A549 (cell line): ENCODE measurements at regions of chr1 and their contacts with region 1.

Region 1: DNA sequence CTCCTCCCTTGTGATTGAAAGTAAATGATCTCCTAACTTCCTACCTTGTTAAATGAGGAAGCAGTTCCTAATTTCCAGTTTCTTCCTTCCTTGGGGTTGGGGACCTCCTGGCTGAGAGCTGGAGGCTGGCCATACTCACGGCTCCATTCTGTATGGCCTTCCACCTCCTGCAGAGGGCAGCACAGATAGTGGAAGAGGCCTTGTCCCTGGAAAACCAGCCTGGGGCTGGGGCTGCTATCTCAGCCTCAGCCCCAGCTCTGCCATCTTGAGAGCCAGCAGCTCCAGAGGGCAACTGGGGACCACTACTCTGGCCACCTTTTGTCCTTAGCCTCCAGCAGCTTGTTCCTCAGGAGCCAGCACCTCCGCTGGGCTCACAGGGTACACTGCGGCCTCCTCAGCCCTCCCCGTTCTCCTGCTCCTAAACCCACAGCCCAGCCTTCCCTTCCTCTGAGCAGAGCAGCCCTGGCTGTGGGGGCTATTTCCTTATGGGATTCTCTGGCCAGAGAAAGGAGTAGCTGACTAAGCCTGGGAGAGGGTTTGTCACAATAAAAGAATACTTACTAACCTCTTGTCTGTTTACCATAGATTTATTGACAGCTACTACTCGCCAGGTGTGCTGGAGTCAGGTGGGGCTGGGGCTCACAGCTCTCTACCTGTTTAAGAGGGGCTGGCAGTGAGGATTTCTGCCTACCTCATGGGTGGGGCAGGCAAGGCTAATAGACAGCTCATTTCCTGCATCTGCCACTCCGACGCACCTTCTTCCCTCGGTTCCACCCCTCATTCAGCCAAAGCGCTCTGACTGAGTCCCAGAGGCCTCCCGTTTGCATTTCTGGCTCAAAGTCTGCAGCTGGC is 6.3 kb downstream of the TMEM234 start:
- DNase-seq: peak; percentile 61 to 62
- ATAC-seq: peak; percentile 94 to 96
- H3K4me3 ChIP-seq: no peak overlapping the region
- H3K27ac ChIP-seq: no peak overlapping the region
- H3K4me1 ChIP-seq: peaks cover 3% of the 10 kb centered on the region; the same call in 2 of the 3 replicates
- CTCF ChIP-seq: peak; percentile 64
- EP300 ChIP-seq: no peak
- POLR2A ChIP-seq: no peak
- RAD21 ChIP-seq: peak; percentile 65 to 75

Region 2: DNA sequence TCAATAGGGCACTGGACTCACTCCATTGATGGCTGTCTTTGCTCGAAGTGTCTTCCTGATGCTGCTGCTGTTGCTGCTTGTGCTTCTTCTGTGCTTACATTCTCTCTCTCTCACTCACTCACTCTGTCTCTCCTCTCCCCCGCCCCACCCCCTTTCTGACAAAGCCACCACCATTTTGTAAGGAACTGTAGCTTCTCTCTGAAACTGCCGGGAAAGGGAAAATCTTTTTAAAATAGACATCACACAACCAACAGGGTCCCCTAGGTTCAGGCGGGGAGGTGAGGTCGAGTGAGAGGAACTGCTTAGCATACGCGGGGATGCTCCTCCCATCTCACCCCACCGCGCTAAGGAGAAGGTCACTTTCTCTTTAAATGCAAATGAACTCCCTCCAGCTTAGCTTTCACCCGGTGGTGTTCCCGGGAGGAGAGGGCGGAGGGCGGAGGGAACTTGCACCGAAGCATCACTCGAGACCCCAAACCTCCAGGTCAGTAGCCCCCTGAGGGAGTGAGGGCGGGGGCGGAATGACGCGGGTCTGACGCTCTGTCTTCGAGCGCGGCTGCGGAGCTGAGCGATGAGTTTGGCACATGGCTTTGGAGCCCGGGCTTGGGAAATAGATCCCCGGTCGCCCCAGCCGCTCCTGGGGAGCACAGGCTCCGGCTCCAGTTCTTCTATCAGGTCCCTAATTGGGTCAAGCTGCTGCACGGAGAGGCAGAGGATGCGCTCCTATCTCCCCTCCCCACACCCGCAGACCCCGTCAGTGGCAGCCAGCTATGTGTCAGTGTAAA is 15.4 kb before region 1 on chr1 and contains the start of gene CCDC28B:
- CTCF ChIA-PET with region 1: interaction called, 38 read pairs
- POLR2A ChIA-PET with region 1: interaction called, 5 read pairs
- DNase-seq: peak in 1 of 2 experiments; percentile 49
- ATAC-seq: peak; percentile 48 to 53
- H3K4me3 ChIP-seq: peak within 1 kb of the TSS; percentile 35
- H3K27ac ChIP-seq: peak within 1 kb of the TSS; percentile 15 to 77; a peak in 5 of 6 replicates
- H3K4me1 ChIP-seq: 0 out of 3 replicates have a peak, but pooled peaks cover 5% of the 10 kb centered on the region
- CTCF ChIP-seq: no peak
- EP300 ChIP-seq: no peak
- POLR2A ChIP-seq: no peak
- RAD21 ChIP-seq: no peak
- polyA plus RNA-seq, gene CCDC28B: 1.1 and 1.2 TPM in 2 replicates

Region 3: DNA sequence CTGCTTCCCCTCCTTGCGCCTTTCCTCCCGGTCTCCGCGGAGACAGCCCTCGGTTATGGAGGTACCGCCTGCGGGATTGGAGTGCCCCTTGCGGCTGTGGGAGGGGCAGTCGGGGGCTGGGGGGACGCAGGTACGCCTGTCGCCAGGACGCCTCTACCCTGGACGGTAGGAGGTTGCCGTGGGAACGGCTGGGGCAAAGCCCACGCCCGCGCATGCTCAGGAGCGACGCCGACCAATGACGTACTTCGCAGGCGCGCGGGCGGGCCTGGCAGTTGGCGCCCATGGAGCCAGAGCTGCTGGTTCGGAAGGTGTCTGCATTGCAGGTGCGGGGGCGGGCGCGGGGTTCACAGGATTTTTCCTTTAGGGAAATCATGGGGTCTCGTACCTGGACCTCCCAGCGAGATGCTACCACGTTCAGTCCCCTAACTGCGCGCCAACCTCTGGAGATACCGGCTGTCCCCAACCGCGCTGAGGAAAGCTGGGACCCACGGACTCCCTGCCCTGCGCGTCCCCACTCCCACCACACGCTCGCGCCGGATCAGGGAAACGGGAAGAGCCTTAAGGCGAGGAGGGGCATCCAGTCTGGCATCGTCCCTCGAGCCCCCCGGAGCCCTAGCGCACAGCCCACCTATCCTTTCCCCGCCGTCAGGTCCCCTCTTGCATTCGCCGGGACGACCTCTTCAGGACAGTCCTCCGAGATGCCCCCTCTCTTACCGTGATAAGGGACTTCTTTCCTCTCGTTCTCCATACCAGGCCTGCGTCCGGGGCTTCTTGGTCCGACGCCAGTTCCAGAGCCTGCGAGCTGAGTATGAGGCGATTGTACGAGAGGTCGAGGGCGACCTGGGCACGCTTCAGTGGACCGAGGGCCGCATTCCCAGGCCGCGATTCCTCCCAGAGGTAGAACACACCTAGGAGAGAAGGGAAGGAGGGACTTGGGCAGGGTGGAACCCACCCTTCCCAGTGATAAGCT is 10.2 kb before region 1 on chr1 and contains the start of gene IQCC:
- CTCF ChIA-PET with region 1: interaction called, 38 read pairs
- POLR2A ChIA-PET with region 1: no interaction called
- DNase-seq: peak; percentile 70 to 81
- ATAC-seq: peak; percentile 75 to 84
- H3K4me3 ChIP-seq: peak within 1 kb of the TSS; percentile 83
- H3K27ac ChIP-seq: peak within 1 kb of the TSS; percentile 85 to 92
- H3K4me1 ChIP-seq: peaks cover 12% of the 10 kb centered on the region; the same call in 2 of the 3 replicates
- CTCF ChIP-seq: no peak
- EP300 ChIP-seq: no peak
- POLR2A ChIP-seq: peak; percentile 57
- RAD21 ChIP-seq: no peak
- polyA plus RNA-seq, gene IQCC: 1.6 and 1.8 TPM in 2 replicates

Region 4: DNA sequence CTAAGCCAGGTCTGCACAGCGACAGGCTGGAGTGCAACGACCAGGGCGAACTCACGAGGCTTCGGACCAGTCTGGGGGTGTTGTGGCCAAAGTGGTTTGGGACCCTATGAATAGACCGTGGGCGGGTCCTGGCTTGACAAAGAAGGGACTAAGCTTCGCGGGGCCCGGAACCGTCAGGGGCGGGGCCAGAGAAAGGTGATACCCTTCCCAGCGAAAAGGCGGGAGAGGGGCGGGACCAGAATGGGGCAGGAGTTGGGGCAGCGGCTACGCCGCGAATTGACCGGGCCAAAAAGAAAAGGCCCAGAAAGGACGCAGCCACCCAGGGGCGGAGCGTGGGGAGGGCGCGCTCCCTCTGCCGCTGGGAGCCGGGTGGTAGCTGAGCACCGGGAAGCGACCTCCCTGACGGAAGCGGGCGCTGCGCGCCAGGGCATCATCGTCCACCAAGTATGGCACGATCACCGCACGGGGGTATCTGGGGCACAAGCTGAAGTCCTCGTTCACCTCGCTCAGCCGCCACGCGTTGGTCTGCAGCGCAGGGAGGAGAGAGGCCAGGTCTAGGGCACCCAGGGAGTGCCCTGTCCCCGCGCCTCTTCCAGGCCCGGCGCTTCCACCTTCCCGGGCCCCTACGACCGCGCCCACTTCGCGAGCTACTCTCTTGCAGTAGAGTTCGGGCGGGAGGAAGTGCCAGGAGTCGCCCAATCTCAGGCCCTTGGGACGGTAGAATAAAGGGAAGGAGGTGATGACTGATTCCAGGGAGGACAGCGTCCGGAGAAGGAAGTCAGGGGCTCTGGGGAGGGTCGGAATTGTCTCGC is 24.5 kb after region 1 on chr1:
- CTCF ChIA-PET with region 1: interaction called, 96 read pairs
- POLR2A ChIA-PET with region 1: interaction called, 8 read pairs
- DNase-seq: peak; percentile 53 to 75
- ATAC-seq: peak; percentile 76 to 85
- H3K4me3 ChIP-seq: peak overlapping the region; percentile 56
- H3K27ac ChIP-seq: peak overlapping the region; percentile 79 to 94
- H3K4me1 ChIP-seq: peaks cover 41% of the 10 kb centered on the region
- CTCF ChIP-seq: peak; percentile 36
- EP300 ChIP-seq: no peak
- POLR2A ChIP-seq: peak; percentile 71
- RAD21 ChIP-seq: peak; percentile 6 to 37; a peak in 2 of 5 replicates

Region 5: DNA sequence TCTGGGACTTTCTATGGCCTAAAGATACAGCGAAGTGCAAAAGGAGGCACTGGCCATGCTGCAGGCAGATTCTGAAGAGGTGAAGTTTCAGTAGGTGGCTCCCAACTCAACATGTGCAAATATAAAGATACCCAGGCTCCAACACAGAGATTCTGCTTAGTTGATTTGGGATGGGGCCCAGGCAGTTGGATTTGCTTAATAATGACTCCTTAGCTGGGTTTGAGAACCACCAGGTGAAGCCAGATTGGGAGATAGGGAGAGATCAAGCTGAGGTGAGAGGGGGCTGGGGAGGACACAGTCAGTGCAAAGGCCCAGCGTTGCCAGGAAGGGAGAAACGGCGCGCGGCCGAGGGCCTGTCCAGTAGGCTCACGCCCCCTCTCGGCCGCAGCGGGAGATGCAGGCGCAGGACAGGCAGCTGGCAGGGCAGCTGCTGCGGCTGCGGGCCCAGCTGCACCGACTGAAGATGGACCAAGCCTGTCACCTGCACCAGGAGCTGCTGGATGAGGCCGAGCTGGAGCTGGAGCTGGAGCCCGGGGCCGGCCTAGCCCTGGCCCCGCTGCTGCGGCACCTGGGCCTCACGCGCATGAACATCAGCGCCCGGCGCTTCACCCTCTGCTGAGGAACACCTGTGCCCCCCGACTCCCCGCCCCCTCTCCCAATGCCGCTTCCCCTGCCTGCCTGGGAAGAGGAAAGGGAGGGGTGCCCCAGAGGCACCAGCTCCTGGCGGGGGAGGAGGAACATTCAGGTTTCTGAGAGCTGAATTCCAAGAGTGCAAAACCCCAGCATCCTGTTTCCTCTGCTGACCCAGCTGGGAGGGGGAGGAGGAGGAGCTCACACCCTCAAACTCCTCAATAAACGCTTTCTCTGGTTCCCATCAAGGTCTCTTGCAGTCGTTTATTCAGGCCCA is 32.4 kb after region 1 on chr1:
- CTCF ChIA-PET with region 1: interaction called, 96 read pairs
- POLR2A ChIA-PET with region 1: no interaction called
- DNase-seq: peak; percentile 72 to 74
- ATAC-seq: peak; percentile 90 to 95
- H3K4me3 ChIP-seq: no peak overlapping the region
- H3K27ac ChIP-seq: peak overlapping the region in 1 of 2 experiments; percentile 57; a peak in 2 of 6 replicates
- H3K4me1 ChIP-seq: peaks cover 3% of the 10 kb centered on the region; the same call in 1 of the 3 replicates
- CTCF ChIP-seq: peak; percentile 66
- EP300 ChIP-seq: no peak
- POLR2A ChIP-seq: no peak
- RAD21 ChIP-seq: peak; percentile 47 to 56

Region 6: DNA sequence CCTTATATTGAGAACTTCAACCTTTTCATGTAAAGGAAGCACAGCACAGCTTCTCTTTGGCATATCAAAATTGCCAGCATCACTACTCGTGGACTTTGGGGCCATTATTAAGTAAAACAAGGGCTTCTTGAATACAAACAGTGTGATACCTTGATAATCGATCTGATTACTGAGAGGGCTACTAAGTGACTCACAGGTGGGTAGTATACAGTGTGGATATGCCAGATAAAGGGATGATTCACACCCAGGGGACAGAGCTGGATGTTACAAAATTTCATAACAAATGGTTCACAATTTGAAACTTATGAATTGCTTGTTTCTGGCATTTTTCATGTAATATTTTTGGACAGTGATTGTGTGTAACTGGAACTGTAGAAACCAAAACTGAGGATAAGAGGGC is 91.5 kb after region 1 on chr1:
- CTCF ChIA-PET with region 1: interaction called, 14 read pairs
- POLR2A ChIA-PET with region 1: no interaction called
- DNase-seq: no peak
- ATAC-seq: no peak
- H3K4me3 ChIP-seq: no peak overlapping the region
- H3K27ac ChIP-seq: no peak overlapping the region
- H3K4me1 ChIP-seq: peaks cover 27% of the 10 kb centered on the region; the same call in 2 of the 3 replicates
- CTCF ChIP-seq: no peak
- EP300 ChIP-seq: no peak
- POLR2A ChIP-seq: no peak
- RAD21 ChIP-seq: no peak

Region 7: GRCh38 chr1:32335790-32336590 is 120.1 kb after region 1 on chr1 and contains the start of gene MARCKSL1:
- CTCF ChIA-PET with region 1: interaction called, 20 read pairs
- POLR2A ChIA-PET with region 1: interaction called, 10 read pairs
- DNase-seq: peak; percentile 43 to 54
- ATAC-seq: peak; percentile 62 to 73
- H3K4me3 ChIP-seq: peak within 1 kb of the TSS; percentile 100
- H3K27ac ChIP-seq: peak within 1 kb of the TSS; percentile 96 to 98
- H3K4me1 ChIP-seq: peaks cover 33% of the 10 kb centered on the region
- CTCF ChIP-seq: no peak
- EP300 ChIP-seq: no peak
- POLR2A ChIP-seq: peak; percentile 90
- RAD21 ChIP-seq: no peak
- polyA plus RNA-seq, gene MARCKSL1: 73.2 and 89.4 TPM in 2 replicates